ENCODE measurements at regions of chr19 and their contacts with region 1.

Region 1: DNA sequence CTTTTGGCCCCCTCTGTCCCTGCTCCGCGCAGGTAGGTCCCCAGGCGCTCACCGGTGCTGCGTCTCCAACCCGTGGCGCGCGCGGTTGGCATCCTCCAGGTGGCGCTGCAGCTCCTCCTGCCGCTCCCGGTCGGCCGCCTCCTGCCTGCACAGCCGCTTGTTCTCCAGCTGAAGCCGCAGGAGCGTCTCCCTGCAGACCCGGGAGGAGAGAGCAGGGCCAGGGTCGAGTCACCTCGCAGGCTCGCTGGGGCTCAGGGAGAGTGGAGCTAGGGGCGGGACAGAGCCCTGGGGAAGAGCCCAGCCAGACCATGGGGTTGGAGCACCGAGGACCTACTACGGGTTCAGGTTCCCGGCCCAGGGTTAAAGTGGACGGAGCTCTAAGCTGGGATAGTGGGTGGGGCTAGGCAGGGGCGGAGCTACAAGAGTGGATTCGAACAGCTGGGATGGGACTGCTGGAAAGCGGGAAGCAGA is 9.3 kb downstream of the HOOK2 start:
- DNase-seq: peak in 3 of 4 donors; percentile 78 to 99 (median 83)
- ATAC-seq: peak; percentile 85
- H3K4me3 ChIP-seq: peak overlapping the region in 1 of 2 donors; percentile 41
- H3K27ac ChIP-seq: peak overlapping the region in 1 of 2 donors; percentile 55
- H3K4me1 ChIP-seq: peaks cover 0 to 22% of the 10 kb centered on the region in 2 donors
- H3K27me3 ChIP-seq: no peaks in the 10 kb centered on the region
- CTCF ChIP-seq: peak; percentile 59 to 96

Region 2: GRCh38 chr19:12793290-12794199 is 27.5 kb after region 1 on chr19:
- intact Hi-C with region 1: loop called in 1 of 2 experiments (anchors 5 kb)
- DNase-seq: peak; percentile 95 to 98 (median 97)
- ATAC-seq: peak; percentile 47
- H3K4me3 ChIP-seq: peak overlapping the region; percentile 92 to 98
- H3K27ac ChIP-seq: peak overlapping the region; percentile 99 to 100
- H3K4me1 ChIP-seq: peaks cover 27 to 45% of the 10 kb centered on the region in 2 donors
- H3K27me3 ChIP-seq: no peaks in the 10 kb centered on the region
- CTCF ChIP-seq: peak in 1 of 2 donors; percentile 20

Region 3: GRCh38 chr19:12801466-12802266 is 35.6 kb after region 1 on chr19 and contains the starts of genes PRDX2 and THSD8:
- intact Hi-C with region 1: loop called (anchors 5 kb)
- DNase-seq: peak; percentile 75 to 92 (median 80)
- ATAC-seq: peak; percentile 93
- H3K4me3 ChIP-seq: peak within 1 kb of the TSS; percentile 76 to 90
- H3K27ac ChIP-seq: peak within 1 kb of the TSS; percentile 19 to 63
- H3K4me1 ChIP-seq: peaks cover 18 to 34% of the 10 kb centered on the region in 2 donors
- H3K27me3 ChIP-seq: peaks cover 0 to 25% of the 10 kb centered on the region in 2 donors
- CTCF ChIP-seq: no peak
- polyA plus RNA-seq, gene PRDX2: 219 to 267 (median 249) TPM
- polyA plus RNA-seq, gene THSD8: 2.2 to 11.6 (median 4.9) TPM

Measured in left lung (tissue), 14 donors.